Thyroid gland (tissue), 4 donors: ENCODE measurements at regions of chr12 and their contacts with region 1.

Region 1: DNA sequence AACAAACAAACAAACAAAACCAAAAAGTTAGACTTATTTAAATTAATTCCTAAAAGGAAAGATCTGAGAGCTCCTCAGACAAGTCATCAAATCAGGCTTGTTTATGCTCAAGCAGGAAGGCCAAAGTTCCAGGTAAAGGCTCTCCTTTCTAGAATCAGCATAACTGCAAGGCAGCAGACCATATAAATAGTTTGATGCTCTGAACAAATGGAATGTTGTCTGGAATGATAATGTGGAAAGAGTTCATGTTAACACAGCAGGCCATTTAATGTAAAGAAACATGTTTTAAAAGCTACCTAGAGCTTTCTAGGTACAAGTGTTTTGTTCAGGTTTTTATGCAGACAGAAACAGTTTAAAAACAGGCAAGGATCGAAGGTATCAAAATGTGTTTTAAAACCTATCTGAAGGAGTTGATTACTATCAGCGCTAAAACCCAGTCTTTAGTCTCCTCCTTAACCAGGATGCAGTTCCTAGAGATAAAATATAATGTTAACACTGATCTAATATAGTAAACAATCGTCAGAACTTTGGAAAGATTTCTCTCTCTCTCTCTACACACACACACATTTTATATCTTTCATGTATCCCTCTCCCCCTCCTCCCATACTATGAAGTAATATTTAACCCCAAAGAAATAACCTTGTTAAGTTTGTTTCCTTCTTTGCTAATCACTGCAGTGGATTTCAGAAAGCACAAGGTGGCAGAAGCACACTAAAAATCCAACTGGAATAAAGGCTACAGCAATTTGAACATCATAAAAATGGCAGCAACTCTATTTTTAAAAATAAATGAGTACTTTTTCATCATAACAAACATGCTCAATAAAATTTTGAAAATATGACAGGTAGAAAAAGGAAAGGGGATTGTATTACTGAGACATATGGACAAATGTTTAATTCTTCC is 135.5 kb downstream of the PAWR start:
- DNase-seq: no peak
- H3K4me3 ChIP-seq: no peak overlapping the region
- H3K27ac ChIP-seq: peak overlapping the region; percentile 58 to 91 (median 82)
- H3K4me1 ChIP-seq: peaks cover 56 to 70% of the 10 kb centered on the region in 2 donors
- H3K27me3 ChIP-seq: no peaks in the 10 kb centered on the region
- CTCF ChIP-seq: peak in 5 of 6 experiments; percentile 23 to 86 (median 72)
- POLR2A ChIP-seq: no peak

Region 2: GRCh38 chr12:79420146-79420618 is 135.1 kb before region 1 on chr12:
- intact Hi-C with region 1: loop called (anchors 10 kb)
- DNase-seq: peak in 1 of 2 donors; percentile 4
- H3K4me3 ChIP-seq: no peak overlapping the region
- H3K27ac ChIP-seq: peak overlapping the region; percentile 38 to 56 (median 44)
- H3K4me1 ChIP-seq: peaks cover 32 to 48% of the 10 kb centered on the region in 2 donors
- H3K27me3 ChIP-seq: no peaks in the 10 kb centered on the region
- CTCF ChIP-seq: peak in 4 of 6 experiments; percentile 46 to 85 (median 66)
- POLR2A ChIP-seq: no peak

Region 3: DNA sequence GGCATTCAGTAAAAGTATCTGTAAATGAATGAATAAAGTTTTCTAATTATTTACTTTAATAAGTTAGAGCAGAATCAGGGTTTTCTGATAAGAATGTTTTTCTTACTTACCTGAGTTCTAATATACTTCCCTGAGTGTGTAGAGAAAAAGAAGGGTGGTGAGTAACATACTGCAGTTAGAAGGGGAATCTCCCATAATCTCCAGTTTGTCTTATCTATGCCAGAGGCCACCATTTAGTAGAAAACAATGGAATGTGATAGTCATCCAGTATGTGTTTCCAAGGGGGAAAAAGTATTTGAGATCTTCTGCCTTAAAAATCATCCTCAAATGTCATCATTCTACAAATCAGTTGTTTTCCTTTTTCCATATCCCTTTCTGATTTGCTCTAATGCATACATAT is 192.0 kb after region 1 on chr12:
- intact Hi-C with region 1: loop called (anchors 10 kb)
- DNase-seq: no peak
- H3K4me3 ChIP-seq: no peak overlapping the region
- H3K27ac ChIP-seq: no peak overlapping the region
- H3K4me1 ChIP-seq: no peaks in the 10 kb centered on the region
- H3K27me3 ChIP-seq: no peaks in the 10 kb centered on the region
- CTCF ChIP-seq: no peak
- POLR2A ChIP-seq: no peak

Region 4: DNA sequence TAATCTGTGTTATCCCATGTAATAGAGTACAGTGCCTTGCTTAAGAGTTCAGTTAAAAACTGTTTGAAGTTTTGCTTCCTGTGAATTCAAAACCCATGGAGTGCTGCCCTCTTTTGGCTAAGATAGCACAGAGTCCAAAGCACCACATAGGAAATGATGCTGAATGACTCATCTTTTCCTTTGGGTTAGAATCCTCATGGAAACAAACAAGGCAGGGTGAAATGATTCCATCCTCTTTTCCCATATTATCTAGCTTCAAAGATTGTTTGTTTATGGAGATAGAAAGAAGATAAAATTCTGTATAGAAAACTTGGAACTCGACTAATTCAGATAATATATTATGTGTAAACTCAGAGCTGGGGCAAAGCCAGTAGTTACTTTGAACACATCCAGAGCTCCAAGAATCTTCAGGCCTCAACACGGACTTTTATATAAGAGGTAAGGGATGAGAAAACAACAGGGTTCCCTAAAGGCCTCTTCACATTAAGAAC is 631.5 kb after region 1 on chr12:
- intact Hi-C with region 1: loop called (anchors 10 kb)
- DNase-seq: peak; percentile 44 to 52
- H3K4me3 ChIP-seq: no peak overlapping the region
- H3K27ac ChIP-seq: peak overlapping the region; percentile 59 to 81 (median 69)
- H3K4me1 ChIP-seq: peaks cover 0 to 4% of the 10 kb centered on the region in 2 donors
- H3K27me3 ChIP-seq: no peaks in the 10 kb centered on the region
- CTCF ChIP-seq: peak in 5 of 6 experiments; percentile 21 to 78 (median 76)
- POLR2A ChIP-seq: no peak